Activated T-helper 1 cell treated with anti-CD3 and anti-CD28 coated beads, Interleukin-12 subunit alpha, Interleukin-12 subunit beta, Interleukin-2, Interleukin-4 antibody, amounts not matched to agents 30 ng/mL and 10 ng/mL and 1 ng/mL, durations not matched to agents 14 hours and 24 hours and 36 hours (primary cell): ENCODE measurements at regions of chr18 and their contacts with region 1.

Region 1: GRCh38 chr18:51668101-51668500 is 470.6 kb upstream of the MEX3C start:
- DNase-seq: peak; percentile 17
- H3K4me3 Mint-ChIP-seq: no peak overlapping the region
- H3K27ac Mint-ChIP-seq: no peak overlapping the region
- H3K4me1 Mint-ChIP-seq: no peaks in the 10 kb centered on the region
- H3K27me3 Mint-ChIP-seq: no peaks in the 10 kb centered on the region

Region 2: DNA sequence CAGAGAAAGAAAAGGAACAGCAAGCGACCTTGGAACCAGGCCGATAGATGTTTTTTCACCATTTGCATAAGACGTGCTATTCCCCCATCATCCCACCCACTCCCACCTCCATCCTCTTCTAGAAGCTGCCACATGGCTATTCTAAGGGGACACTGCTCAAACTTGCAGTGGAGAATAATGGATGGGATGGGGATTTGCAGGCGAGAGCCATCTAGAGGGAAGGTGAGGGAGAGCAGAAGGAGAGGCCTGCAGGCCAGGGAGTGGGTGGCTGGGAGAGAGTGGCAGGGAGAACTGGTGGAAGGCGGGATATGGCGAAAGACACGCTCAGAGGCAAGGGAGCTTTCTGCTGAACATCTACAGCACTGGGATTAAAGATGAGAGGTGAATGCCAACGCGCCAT is 1023.3 kb before region 1 on chr18:
- intact Hi-C with region 1: no loop called
- DNase-seq: no peak
- H3K4me3 Mint-ChIP-seq: no peak overlapping the region
- H3K27ac Mint-ChIP-seq: no peak overlapping the region
- H3K4me1 Mint-ChIP-seq: no peaks in the 10 kb centered on the region
- H3K27me3 Mint-ChIP-seq: peaks cover 3% of the 10 kb centered on the region

Region 3: GRCh38 chr18:51110073-51110803 is 557.9 kb before region 1 on chr18:
- intact Hi-C with region 1: loop called (anchors 1 kb)
- DNase-seq: peak; percentile 57
- H3K4me3 Mint-ChIP-seq: no peak overlapping the region
- H3K27ac Mint-ChIP-seq: no peak overlapping the region
- H3K4me1 Mint-ChIP-seq: peaks cover 22% of the 10 kb centered on the region
- H3K27me3 Mint-ChIP-seq: no peaks in the 10 kb centered on the region

Region 4: GRCh38 chr18:52288403-52289004 is 620.4 kb after region 1 on chr18:
- intact Hi-C with region 1: loop called (anchors 1 kb)
- DNase-seq: no peak
- H3K4me3 Mint-ChIP-seq: no peak overlapping the region
- H3K27ac Mint-ChIP-seq: no peak overlapping the region
- H3K4me1 Mint-ChIP-seq: no peaks in the 10 kb centered on the region
- H3K27me3 Mint-ChIP-seq: no peaks in the 10 kb centered on the region